Activated CD4-positive, alpha-beta memory T cell treated with anti-CD3 and anti-CD28 coated beads for 36 hours (primary cell): ENCODE measurements at regions of chr12 and their contacts with region 1.

Region 1: DNA sequence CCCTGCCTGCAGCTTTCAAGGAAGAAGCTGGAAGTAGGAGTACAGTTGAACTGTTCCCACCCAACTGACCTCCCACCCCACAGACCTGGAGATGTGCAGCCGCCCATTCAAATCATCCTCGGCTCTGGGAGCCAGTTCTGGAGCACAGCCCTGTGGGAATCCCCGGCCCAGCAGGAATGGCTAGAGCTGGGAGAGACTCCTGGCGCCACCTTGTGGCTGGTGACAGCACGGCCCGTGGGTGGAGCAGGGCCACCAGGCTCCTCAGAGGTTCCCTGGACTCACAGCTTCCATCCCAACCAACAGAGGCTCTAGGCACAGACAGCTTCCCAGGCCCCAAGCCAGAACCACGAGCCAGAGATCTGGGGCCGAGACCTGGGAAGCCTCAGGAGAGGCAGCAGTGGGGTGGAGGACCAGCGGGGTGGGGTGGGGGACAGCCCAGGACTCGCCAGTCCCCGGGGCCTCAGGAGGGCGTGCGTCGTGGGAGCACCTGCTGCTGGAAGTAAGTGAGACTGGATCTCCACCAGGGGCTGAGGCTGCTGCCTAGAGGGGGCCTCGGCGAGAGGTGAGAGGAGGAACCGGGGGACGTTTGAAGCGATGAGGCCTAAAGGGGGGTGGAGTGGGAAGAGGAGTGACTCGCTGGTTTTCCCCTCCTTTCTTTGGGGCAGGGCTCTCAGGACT is 43.4 kb downstream of the RNF34 start:
- DNase-seq: peak; percentile 80
- H3K4me3 Mint-ChIP-seq: no peak overlapping the region
- H3K27ac Mint-ChIP-seq: no peak overlapping the region
- H3K4me1 Mint-ChIP-seq: peaks cover 2% of the 10 kb centered on the region
- H3K27me3 Mint-ChIP-seq: no peaks in the 10 kb centered on the region

Region 2: GRCh38 chr12:121279507-121279915 is 163.8 kb before region 1 on chr12:
- CTCF ChIA-PET with region 1: no interaction called
- POLR2A ChIA-PET with region 1: no interaction called
- intact Hi-C with region 1: no loop called
- DNase-seq: no peak
- H3K4me3 Mint-ChIP-seq: no peak overlapping the region
- H3K27ac Mint-ChIP-seq: no peak overlapping the region
- H3K4me1 Mint-ChIP-seq: peaks cover 8% of the 10 kb centered on the region
- H3K27me3 Mint-ChIP-seq: no peaks in the 10 kb centered on the region

Region 3: DNA sequence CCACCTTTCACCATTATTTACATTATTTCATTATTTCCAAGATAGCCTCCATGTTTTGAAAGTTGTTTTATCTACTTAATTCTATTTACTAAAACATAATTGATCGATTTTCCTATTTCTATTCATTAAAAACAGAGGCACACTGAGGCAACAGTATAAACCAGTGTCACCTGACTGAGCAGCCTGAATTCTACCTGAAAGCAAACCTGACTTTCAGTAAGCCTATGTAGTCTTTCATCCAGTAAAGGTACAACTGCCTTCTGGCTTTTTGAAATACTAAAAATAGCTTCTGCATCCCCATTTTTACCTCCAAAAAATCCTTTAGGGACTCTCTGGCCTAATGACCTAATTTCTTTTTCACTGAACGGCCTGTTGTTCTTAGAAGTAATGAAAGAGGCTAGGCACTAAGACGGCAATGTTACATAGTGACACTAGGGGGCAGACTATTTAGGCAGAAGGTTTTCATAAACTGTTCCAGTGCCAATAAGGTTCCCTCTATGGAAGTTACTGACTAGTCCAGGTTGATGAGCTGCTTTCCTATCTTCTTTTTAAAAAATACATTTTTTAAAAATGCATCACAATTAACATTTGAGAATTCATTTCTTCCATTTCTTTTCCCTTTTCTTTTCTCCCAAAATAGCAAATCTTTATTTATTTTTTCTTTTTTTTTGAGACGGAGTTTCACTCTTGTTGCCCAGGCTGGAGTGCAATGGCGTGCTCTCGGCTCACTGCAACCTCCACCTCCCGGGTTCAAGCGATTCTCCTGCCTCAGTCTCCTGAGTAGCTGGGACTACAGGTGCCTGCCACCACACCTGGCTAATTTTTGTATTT is 108.6 kb before region 1 on chr12:
- CTCF ChIA-PET with region 1: interaction called, 89 read pairs
- POLR2A ChIA-PET with region 1: no interaction called
- intact Hi-C with region 1: loop called (anchors 2 kb)
- DNase-seq: no peak
- H3K4me3 Mint-ChIP-seq: no peak overlapping the region
- H3K27ac Mint-ChIP-seq: no peak overlapping the region
- H3K4me1 Mint-ChIP-seq: no peaks in the 10 kb centered on the region
- H3K27me3 Mint-ChIP-seq: no peaks in the 10 kb centered on the region

Region 4: GRCh38 chr12:121404734-121405133 is 38.6 kb before region 1 on chr12:
- CTCF ChIA-PET with region 1: interaction called, 11 read pairs
- POLR2A ChIA-PET with region 1: no interaction called
- intact Hi-C with region 1: no loop called
- DNase-seq: no peak
- H3K4me3 Mint-ChIP-seq: no peak overlapping the region
- H3K27ac Mint-ChIP-seq: no peak overlapping the region
- H3K4me1 Mint-ChIP-seq: peaks cover 49% of the 10 kb centered on the region
- H3K27me3 Mint-ChIP-seq: no peaks in the 10 kb centered on the region

Region 5: DNA sequence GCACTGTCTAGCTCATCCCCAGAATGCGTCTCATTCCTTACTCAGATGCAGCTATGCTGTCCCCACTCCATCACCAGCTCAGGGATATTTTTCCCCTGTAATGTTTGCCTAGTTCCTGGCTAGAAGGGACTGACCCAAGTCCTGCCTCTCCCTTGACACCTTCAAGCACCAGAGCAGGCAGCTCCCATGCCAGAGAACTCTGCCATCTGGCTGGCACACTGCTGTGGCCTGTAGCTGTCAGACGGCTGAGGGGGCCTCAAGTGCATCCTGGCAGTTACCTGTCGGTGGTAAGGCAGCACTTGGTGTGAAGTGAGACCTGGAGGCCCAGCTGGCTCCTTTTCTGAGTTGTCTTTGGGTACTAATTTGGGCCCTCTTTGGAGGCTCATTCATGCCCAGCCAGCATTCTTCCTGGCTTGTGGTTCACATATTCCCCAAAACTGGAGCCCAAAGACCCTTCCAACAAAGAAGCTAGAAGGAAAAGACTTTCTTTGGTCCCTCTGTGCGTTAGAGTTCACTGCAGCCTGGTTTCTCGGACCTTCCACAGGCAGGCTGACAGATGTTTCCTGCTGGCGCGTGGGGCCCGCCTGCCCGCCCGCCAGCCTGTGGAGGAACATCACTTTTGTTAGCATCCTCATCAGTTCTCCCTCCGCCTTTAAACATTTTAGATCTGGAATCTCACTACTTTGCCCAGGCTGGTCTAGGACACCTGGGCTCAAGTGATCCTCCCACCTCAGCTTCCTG is 10.4 kb before region 1 on chr12:
- CTCF ChIA-PET with region 1: interaction called, 53 read pairs
- POLR2A ChIA-PET with region 1: interaction called, 6 read pairs
- intact Hi-C with region 1: no loop called
- DNase-seq: no peak
- H3K4me3 Mint-ChIP-seq: no peak overlapping the region
- H3K27ac Mint-ChIP-seq: peak overlapping the region; percentile 42
- H3K4me1 Mint-ChIP-seq: no peaks in the 10 kb centered on the region
- H3K27me3 Mint-ChIP-seq: no peaks in the 10 kb centered on the region

Region 6: GRCh38 chr12:121461048-121461447 is 17.7 kb after region 1 on chr12:
- CTCF ChIA-PET with region 1: interaction called, 23 read pairs
- POLR2A ChIA-PET with region 1: interaction called, 5 read pairs
- intact Hi-C with region 1: no loop called
- DNase-seq: peak; percentile 31
- H3K4me3 Mint-ChIP-seq: no peak overlapping the region
- H3K27ac Mint-ChIP-seq: peak overlapping the region; percentile 4
- H3K4me1 Mint-ChIP-seq: peaks cover 53% of the 10 kb centered on the region
- H3K27me3 Mint-ChIP-seq: no peaks in the 10 kb centered on the region

Region 7: GRCh38 chr12:121568971-121569751 is 125.8 kb after region 1 on chr12:
- CTCF ChIA-PET with region 1: no interaction called
- POLR2A ChIA-PET with region 1: no interaction called
- intact Hi-C with region 1: no loop called
- DNase-seq: no peak
- H3K4me3 Mint-ChIP-seq: no peak overlapping the region
- H3K27ac Mint-ChIP-seq: no peak overlapping the region
- H3K4me1 Mint-ChIP-seq: peaks cover 7% of the 10 kb centered on the region
- H3K27me3 Mint-ChIP-seq: no peaks in the 10 kb centered on the region